ENCODE measurements at regions of chr7 and their contacts with region 1.

Region 1: DNA sequence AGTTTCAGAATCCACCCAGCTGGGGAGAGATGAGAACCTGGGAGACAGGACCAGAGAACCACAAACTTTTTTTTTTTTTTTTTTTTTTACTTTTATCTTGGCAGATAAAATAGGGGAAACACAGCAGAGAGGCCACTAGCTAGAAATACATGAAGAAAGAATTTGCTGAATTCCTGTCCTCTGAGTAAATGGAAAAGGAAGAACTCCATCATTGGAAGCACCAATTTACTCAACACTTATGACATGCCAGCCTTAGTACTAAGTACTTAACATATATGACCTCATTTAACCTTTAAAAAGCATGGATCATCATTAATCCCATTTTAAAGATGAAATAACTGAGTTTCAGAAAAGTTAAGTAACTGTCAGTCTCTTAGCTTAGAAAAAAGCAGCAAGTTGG is 343.0 kb upstream of the NPSR1 start:
- DNase-seq: no peak
- ATAC-seq: no peak
- H3K4me3 ChIP-seq: no peak overlapping the region
- H3K27ac ChIP-seq: no peak overlapping the region
- H3K4me1 ChIP-seq: no peaks in the 10 kb centered on the region
- H3K27me3 ChIP-seq: no peaks in the 10 kb centered on the region
- CTCF ChIP-seq: no peak
- POLR2A ChIP-seq: no peak

Region 2: GRCh38 chr7:34425187-34425586 is 110.2 kb after region 1 on chr7:
- intact Hi-C with region 1: loop called in 5 of 10 experiments (anchors 2 to 10 kb)
- DNase-seq: no peak
- ATAC-seq: no peak
- H3K4me3 ChIP-seq: no peak overlapping the region
- H3K27ac ChIP-seq: no peak overlapping the region
- H3K4me1 ChIP-seq: no peaks in the 10 kb centered on the region
- H3K27me3 ChIP-seq: no peaks in the 10 kb centered on the region
- CTCF ChIP-seq: no peak
- POLR2A ChIP-seq: no peak

Measured in heart left ventricle (tissue), 16 donors.